ENCODE measurements at regions of chr14 and their contacts with region 1.

Region 1: DNA sequence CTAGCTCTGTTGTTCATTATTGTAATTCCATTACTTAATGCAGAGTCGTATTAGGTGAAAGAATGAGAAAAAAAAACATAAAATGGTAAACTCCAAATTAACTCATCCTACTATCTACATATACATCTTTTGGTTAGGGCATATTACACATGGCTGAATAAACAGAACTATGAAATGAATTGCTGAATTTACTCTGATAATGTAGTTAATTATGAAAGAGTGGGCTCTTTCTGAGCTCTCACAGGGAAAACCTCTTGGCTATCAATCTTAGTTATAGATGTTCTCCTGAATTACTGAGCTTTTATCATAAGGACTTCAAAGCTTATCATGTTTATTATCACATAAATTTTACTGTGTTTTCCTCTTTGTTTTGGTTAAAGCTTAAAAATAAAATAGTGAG is 798.5 kb upstream of the MDGA2 start:
- DNase-seq: no peak
- H3K4me3 ChIP-seq: no peak overlapping the region
- H3K27ac ChIP-seq: no peak overlapping the region
- H3K4me1 ChIP-seq: no peaks in the 10 kb centered on the region
- H3K27me3 ChIP-seq: no peaks in the 10 kb centered on the region
- CTCF ChIP-seq: no peak

Region 2: DNA sequence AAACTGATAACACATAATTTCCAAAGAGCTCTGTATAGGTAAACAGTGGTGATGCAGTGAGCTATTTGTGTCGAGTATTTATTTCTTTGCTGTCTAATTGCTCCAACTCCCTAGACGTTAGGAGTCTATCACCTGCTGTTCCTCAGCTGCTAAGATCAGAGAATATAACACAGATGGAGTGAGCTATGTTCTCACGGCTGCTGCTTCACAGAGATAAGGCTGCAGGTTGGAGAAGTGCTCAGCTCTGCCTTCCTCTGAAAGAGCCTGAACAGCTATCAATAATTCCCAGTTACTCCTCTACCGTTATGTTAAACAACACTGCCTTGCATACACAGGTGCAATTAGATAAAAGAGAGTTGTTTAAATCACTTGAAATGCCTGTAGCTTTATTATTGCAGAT is 695.3 kb before region 1 on chr14:
- CTCF ChIA-PET with region 1: interaction called, 15 read pairs
- dilution Hi-C with region 1: no loop called
- in situ Hi-C with region 1: no loop called
- intact Hi-C with region 1: no loop called
- DNase-seq: no peak
- H3K4me3 ChIP-seq: no peak overlapping the region
- H3K27ac ChIP-seq: no peak overlapping the region
- H3K4me1 ChIP-seq: no peaks in the 10 kb centered on the region
- H3K27me3 ChIP-seq: no peaks in the 10 kb centered on the region
- CTCF ChIP-seq: no peak